Right lobe of liver (tissue), 6 donors: ENCODE measurements at regions of chr6 and their contacts with region 1.

Region 1: GRCh38 chr6:52284460-52285176 is at the start of gene MCM3:
- DNase-seq: peak; percentile 95 to 99 (median 98)
- ATAC-seq: peak; percentile 99 to 100 (median 99)
- H3K4me3 ChIP-seq: peak within 1 kb of the TSS; percentile 76 to 92 (median 79)
- H3K27ac ChIP-seq: peak within 1 kb of the TSS; percentile 47 to 56 (median 51)
- H3K4me1 ChIP-seq: peaks cover 0 to 11% (median 3%) of the 10 kb centered on the region in 4 donors
- H3K27me3 ChIP-seq: no peaks in the 10 kb centered on the region
- CTCF ChIP-seq: peak in 2 of 4 donors; percentile 32 to 33
- POLR2A ChIP-seq: peak; percentile 68
- total RNA-seq, gene MCM3: 6.6 to 35.9 (median 10.5) TPM

Region 2: GRCh38 chr6:52399511-52400312 is 115.1 kb after region 1 on chr6:
- intact Hi-C with region 1: loop called (anchors 10 kb)
- DNase-seq: no peak
- ATAC-seq: peak; percentile 87 to 96 (median 92)
- H3K4me3 ChIP-seq: no peak overlapping the region
- H3K27ac ChIP-seq: no peak overlapping the region
- H3K4me1 ChIP-seq: no peaks in the 10 kb centered on the region
- H3K27me3 ChIP-seq: no peaks in the 10 kb centered on the region
- CTCF ChIP-seq: peak; percentile 79 to 84 (median 81)
- POLR2A ChIP-seq: no peak